AG04449 (cell line): ENCODE measurements at regions of chr5 and their contacts with region 1.

Region 1: GRCh38 chr5:73365301-73365853 is 83.2 kb downstream of the FOXD1 start:
- DNase-seq: no peak
- H3K4me3 ChIP-seq: no peak overlapping the region
- CTCF ChIP-seq: no peak

Region 2: DNA sequence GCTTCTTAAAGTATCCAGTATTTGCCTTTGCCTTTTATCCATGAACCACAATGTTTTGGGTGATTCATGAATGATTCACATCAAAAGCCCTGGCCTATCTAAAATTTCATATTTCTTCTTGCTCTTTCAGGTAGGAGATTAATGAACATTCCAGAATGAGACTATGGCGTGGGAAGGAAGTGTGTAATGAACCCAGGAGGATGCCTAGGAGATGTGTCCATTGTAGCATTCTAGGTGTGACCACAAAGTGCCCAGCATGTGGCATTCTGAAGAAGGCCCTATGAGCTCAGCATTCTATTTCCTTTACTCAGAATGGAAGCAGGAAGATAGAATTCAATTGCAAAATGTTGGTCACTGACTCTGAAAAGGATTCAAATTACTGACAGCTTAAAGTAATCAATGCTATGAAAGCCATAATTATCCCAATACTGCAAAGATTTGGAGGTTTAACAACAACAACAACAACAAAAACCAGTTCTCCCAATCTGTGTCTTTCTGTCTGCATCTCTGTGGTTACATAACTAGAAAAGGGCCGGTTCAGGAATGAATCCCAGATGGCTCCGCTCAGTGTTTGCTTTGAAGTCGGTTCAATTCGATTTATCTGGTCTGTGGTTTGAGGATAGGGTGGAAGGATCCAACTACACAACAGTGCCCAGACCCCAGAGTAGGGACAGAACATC is 43.5 kb before region 1 on chr5:
- CTCF ChIA-PET with region 1: interaction called, 4 read pairs
- POLR2A ChIA-PET with region 1: interaction called, 13 read pairs
- DNase-seq: peak; percentile 91
- H3K4me3 ChIP-seq: no peak overlapping the region
- CTCF ChIP-seq: no peak

Region 3: GRCh38 chr5:73354406-73354805 is 11.0 kb before region 1 on chr5:
- CTCF ChIA-PET with region 1: interaction called, 25 read pairs
- POLR2A ChIA-PET with region 1: interaction called, 3 read pairs
- DNase-seq: no peak
- H3K4me3 ChIP-seq: no peak overlapping the region
- CTCF ChIP-seq: no peak